ENCODE measurements at regions of chr5 and their contacts with region 1.

Region 1: GRCh38 chr5:170388818-170389549 is at the start of gene KCNMB1:
- DNase-seq: peak in 1 of 2 donors; percentile 80
- H3K4me3 ChIP-seq: peak within 1 kb of the TSS; percentile 59 to 73
- H3K27ac ChIP-seq: peak within 1 kb of the TSS; percentile 94 to 97
- H3K4me1 ChIP-seq: peaks cover 6 to 19% of the 10 kb centered on the region in 2 donors
- H3K27me3 ChIP-seq: no peaks in the 10 kb centered on the region
- CTCF ChIP-seq: no peak
- total RNA-seq, gene KCNMB1: 30.8 TPM

Region 2: GRCh38 chr5:170092455-170093101 is 296.4 kb before region 1 on chr5:
- intact Hi-C with region 1: no loop called
- DNase-seq: no peak
- H3K4me3 ChIP-seq: no peak overlapping the region
- H3K27ac ChIP-seq: no peak overlapping the region
- H3K4me1 ChIP-seq: no peaks in the 10 kb centered on the region
- H3K27me3 ChIP-seq: no peaks in the 10 kb centered on the region
- CTCF ChIP-seq: no peak

Region 3: GRCh38 chr5:170151097-170151831 is 237.7 kb before region 1 on chr5:
- intact Hi-C with region 1: loop called (anchors 5 kb)
- DNase-seq: peak in 1 of 2 donors; percentile 80
- H3K4me3 ChIP-seq: no peak overlapping the region
- H3K27ac ChIP-seq: peak overlapping the region; percentile 65 to 68
- H3K4me1 ChIP-seq: peaks cover 0 to 6% of the 10 kb centered on the region in 2 donors
- H3K27me3 ChIP-seq: no peaks in the 10 kb centered on the region
- CTCF ChIP-seq: no peak

Region 4: GRCh38 chr5:170253844-170254455 is 135.0 kb before region 1 on chr5:
- intact Hi-C with region 1: no loop called
- DNase-seq: no peak
- H3K4me3 ChIP-seq: no peak overlapping the region
- H3K27ac ChIP-seq: no peak overlapping the region
- H3K4me1 ChIP-seq: no peaks in the 10 kb centered on the region
- H3K27me3 ChIP-seq: no peaks in the 10 kb centered on the region
- CTCF ChIP-seq: no peak

Region 5: GRCh38 chr5:170306381-170306831 is 82.6 kb before region 1 on chr5:
- intact Hi-C with region 1: loop called (anchors 2 kb)
- DNase-seq: peak; percentile 65 to 93
- H3K4me3 ChIP-seq: no peak overlapping the region
- H3K27ac ChIP-seq: peak overlapping the region; percentile 52 to 68
- H3K4me1 ChIP-seq: peaks cover 7 to 23% of the 10 kb centered on the region in 2 donors
- H3K27me3 ChIP-seq: no peaks in the 10 kb centered on the region
- CTCF ChIP-seq: no peak

Region 6: GRCh38 chr5:170333161-170333910 is 55.6 kb before region 1 on chr5:
- intact Hi-C with region 1: loop called (anchors 2 kb)
- DNase-seq: peak in 1 of 2 donors; percentile 37
- H3K4me3 ChIP-seq: no peak overlapping the region
- H3K27ac ChIP-seq: no peak overlapping the region
- H3K4me1 ChIP-seq: peaks cover 0 to 14% of the 10 kb centered on the region in 2 donors
- H3K27me3 ChIP-seq: no peaks in the 10 kb centered on the region
- CTCF ChIP-seq: no peak

Region 7: DNA sequence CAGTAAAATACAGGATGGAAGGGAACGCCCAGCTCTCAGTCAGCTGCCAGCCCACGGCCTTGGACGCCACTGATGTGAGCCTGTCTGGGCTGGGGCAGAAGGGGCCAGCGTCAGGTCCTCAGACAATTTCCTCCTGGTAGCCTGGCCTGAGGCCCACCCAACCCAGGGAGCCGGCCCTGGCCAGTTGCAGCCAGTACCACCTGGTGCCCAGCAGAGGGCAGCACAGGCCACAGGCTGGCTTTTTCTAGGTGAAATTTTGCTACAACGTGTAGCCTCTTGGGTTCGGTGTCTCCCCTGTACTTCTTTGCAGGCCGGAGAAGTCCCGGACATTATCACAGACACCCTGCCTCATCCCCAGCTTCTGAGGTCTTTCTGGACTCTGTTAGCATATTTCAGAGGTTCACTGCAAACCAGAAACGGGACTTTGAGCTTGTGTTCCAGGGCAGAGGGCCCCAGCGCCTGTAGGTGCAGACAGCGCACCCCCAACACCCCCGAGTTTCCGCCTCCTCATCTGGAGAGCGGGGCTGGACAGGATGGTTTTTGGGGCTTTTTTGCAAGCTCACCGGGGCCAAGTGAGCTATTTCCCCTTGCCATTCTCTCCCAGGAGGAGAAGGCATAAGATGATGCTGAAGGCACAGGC is 46.1 kb after region 1 on chr5:
- intact Hi-C with region 1: no loop called
- DNase-seq: peak in 1 of 2 donors; percentile 77
- H3K4me3 ChIP-seq: no peak overlapping the region
- H3K27ac ChIP-seq: no peak overlapping the region
- H3K4me1 ChIP-seq: no peaks in the 10 kb centered on the region
- H3K27me3 ChIP-seq: no peaks in the 10 kb centered on the region
- CTCF ChIP-seq: peak; percentile 83 to 96 (median 92)

Region 8: DNA sequence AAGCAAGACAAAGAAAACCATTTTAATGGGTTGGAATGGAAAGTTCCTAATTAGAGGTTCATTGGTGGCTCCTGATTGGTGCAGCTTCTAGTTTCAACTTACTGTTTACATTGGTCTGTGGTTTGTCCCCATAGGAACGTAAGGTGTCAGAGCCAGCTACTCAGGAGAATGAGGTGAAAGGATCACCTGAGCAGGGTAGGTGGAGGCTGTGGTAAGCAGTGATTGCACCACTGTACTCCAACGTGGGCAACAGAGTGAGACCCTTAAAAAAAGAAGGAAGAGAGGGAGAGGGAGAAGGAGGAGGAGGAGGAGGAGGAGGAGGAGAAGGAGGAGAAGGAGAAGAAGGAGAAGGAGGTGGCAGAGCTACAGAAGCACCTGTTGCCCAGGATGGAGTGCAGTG is 145.2 kb after region 1 on chr5:
- intact Hi-C with region 1: no loop called
- DNase-seq: no peak
- H3K4me3 ChIP-seq: no peak overlapping the region
- H3K27ac ChIP-seq: no peak overlapping the region
- H3K4me1 ChIP-seq: no peaks in the 10 kb centered on the region
- H3K27me3 ChIP-seq: no peaks in the 10 kb centered on the region
- CTCF ChIP-seq: no peak

Region 9: DNA sequence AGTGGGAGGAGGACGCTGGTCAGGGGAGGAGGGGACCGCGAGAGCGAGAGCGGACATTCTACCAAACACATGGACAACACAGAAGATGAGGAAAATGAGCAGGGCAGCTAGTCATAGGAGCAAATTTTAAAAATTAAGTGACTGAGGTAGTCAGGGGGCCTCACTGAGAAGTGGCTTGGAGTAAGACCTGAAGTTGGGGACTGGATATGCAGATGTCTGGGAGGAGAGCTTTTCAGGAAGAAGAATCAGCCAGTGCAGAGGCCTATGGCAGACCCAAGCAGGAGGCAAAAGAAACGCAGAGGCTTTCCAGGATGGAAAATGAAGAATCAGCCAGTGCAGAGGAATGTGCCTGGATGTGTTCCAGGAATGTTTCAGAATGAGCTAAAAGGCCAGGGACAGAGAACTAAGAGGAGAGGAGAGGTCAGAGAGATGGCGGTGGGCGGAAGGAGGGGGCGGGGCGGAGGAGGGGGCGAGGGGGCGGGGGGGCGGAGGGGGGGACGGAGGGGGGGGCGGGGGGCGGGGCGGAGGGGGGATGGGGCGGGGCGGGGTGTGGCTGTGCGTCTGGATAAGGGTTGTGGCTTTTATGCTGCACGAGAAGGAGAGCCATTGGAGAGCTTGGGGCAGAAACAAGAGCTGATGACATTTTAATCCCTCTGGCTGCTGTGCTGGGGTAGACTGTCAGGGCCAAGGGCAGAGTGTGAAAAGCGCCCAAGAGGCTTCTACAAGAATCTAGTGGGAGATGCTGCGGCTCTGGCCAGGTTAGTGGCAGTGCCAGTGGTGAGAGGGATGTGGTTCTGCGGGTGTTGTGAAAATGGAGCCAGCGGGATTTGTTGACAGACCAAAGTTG is 244.5 kb after region 1 on chr5:
- intact Hi-C with region 1: loop called (anchors 5 kb)
- DNase-seq: peak in 1 of 2 donors; percentile 85
- H3K4me3 ChIP-seq: peak overlapping the region; percentile 33 to 53
- H3K27ac ChIP-seq: peak overlapping the region; percentile 73 to 90
- H3K4me1 ChIP-seq: peaks cover 3 to 24% of the 10 kb centered on the region in 2 donors
- H3K27me3 ChIP-seq: no peaks in the 10 kb centered on the region
- CTCF ChIP-seq: no peak

Measured in ascending aorta (tissue), 2 donors.